ENCODE measurements at regions of chr12 and their contacts with region 1.

Region 1: DNA sequence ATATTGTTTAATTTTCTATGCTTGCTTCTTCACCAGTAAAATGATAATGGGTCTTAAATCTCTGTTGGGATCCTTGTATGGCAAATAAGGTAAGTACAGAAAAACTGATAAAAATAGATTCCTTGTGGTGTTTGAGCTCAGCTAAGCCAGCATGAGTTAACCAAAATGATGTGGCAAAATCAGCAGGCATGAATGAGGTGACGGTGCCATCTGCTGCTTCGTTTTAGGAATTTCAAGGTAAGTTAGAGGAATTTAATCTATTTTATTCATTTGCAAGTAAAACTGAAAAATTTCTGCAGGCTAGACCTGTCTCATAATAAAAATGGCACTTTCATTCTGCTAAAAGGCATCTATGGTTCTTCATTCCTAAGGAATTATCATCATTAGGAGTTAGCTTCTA is 10.0 kb upstream of the CLEC7A start:
- DNase-seq: no peak
- H3K4me3 ChIP-seq: no peak overlapping the region
- H3K27ac ChIP-seq: no peak overlapping the region
- H3K4me1 ChIP-seq: peaks cover 0 to 14% (median 6%) of the 10 kb centered on the region in 4 donors
- H3K27me3 ChIP-seq: no peaks in the 10 kb centered on the region
- CTCF ChIP-seq: peak; percentile 51 to 73 (median 63)
- EP300 ChIP-seq: no peak
- POLR2A ChIP-seq: no peak

Region 2: DNA sequence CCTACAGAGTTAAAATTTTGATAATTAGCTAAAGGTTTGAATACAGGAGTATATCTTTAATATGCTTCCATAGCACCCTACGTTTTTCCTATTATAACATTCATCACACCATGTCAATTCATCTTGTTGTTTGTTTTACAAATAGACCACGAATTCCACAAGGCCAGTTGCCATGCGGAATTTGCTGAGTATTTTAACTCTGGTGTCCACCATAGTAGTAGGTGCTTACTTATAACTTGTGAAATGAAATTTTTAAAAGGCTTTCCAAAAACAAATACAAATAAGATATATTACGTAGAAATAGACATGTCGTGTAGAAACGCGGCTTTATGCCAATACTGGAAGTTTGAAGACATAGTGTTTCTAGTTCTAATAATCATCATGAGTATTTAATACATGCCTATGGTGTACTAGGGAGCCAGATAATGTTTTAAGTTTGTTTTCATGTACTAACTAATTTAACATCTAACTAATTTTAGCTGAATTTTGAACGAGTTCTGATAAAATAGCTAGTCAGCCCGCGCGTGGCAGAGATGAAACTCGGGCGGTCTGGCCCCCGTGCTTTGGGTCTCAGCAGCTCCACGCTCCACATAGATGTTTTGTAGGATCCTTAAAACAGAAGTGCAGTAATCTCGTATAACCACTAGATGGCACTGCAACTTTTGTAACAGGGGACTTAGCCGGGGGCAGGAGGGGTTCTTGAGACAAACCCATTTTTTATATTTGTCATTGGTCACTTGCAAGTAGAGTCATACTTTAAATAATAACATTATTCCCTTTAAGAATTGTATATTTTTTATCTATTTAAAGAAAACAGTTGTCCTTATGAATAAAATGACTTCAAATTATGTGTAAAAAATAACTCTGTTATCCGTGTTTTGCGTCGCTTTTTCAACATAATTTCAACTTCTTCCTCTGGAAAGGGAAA is 389.5 kb before region 1 on chr12:
- intact Hi-C with region 1: loop called (anchors 5 kb)
- DNase-seq: no peak
- H3K4me3 ChIP-seq: peak overlapping the region; percentile 1 to 26 (median 12)
- H3K27ac ChIP-seq: no peak overlapping the region
- H3K4me1 ChIP-seq: peaks cover 0 to 8% (median 1%) of the 10 kb centered on the region in 4 donors
- H3K27me3 ChIP-seq: peaks cover 0 to 4% (median 0%) of the 10 kb centered on the region in 4 donors
- CTCF ChIP-seq: peak; percentile 82 to 85 (median 83)
- EP300 ChIP-seq: no peak
- POLR2A ChIP-seq: no peak

Region 3: DNA sequence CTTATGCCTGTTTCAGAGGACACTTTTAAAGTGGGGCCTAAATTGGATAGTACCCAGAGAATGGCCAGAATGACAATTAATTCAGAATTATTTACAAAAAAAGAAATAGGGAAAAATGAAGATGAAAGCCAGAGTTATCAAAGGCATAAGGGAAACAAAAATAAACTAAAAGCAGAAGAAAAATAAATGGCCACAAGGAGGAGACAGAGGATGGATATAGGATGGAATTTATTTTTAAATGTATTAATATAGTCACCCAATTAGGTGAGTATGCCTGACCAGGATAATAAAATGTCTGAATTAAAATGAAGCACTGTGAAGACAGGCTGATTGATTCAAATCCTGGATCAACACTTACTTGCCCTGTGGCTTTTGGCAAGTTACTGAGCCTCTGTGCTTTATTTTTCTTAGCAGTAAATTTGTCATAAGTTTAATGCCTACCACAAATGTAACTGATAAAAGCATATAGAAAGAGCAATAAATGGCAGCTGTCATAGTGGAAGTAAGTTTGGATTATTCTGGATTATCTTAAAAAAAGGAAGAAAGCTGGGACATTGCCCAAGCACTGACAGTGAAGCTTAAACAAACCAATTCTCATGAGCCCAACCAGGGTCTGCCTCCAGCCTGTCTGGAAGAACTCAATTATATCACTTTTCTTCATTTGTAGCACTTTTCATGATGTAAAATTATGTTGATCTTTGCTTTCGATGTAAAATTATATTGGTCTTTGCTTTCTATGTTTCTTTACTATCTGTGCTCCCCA is 106.0 kb before region 1 on chr12:
- intact Hi-C with region 1: loop called (anchors 2 kb)
- DNase-seq: no peak
- H3K4me3 ChIP-seq: no peak overlapping the region
- H3K27ac ChIP-seq: no peak overlapping the region
- H3K4me1 ChIP-seq: peaks cover 0 to 3% (median 0%) of the 10 kb centered on the region in 4 donors
- H3K27me3 ChIP-seq: no peaks in the 10 kb centered on the region
- CTCF ChIP-seq: peak; percentile 37 to 52 (median 48)
- EP300 ChIP-seq: no peak
- POLR2A ChIP-seq: no peak

Region 4: GRCh38 chr12:10409387-10409786 is 269.4 kb after region 1 on chr12 and contains the start of gene KLRC4:
- intact Hi-C with region 1: no loop called
- DNase-seq: no peak
- H3K4me3 ChIP-seq: no peak within 1 kb of the TSS
- H3K27ac ChIP-seq: no peak within 1 kb of the TSS
- H3K4me1 ChIP-seq: no peaks in the 10 kb centered on the region
- H3K27me3 ChIP-seq: no peaks in the 10 kb centered on the region
- CTCF ChIP-seq: no peak
- EP300 ChIP-seq: no peak
- POLR2A ChIP-seq: no peak
- total RNA-seq, gene KLRC4: 0.83 TPM in 1 of 4 donors, not detected in the others